B cell (primary cell): ENCODE measurements at regions of chr3 and their contacts with region 1.

Region 1: DNA sequence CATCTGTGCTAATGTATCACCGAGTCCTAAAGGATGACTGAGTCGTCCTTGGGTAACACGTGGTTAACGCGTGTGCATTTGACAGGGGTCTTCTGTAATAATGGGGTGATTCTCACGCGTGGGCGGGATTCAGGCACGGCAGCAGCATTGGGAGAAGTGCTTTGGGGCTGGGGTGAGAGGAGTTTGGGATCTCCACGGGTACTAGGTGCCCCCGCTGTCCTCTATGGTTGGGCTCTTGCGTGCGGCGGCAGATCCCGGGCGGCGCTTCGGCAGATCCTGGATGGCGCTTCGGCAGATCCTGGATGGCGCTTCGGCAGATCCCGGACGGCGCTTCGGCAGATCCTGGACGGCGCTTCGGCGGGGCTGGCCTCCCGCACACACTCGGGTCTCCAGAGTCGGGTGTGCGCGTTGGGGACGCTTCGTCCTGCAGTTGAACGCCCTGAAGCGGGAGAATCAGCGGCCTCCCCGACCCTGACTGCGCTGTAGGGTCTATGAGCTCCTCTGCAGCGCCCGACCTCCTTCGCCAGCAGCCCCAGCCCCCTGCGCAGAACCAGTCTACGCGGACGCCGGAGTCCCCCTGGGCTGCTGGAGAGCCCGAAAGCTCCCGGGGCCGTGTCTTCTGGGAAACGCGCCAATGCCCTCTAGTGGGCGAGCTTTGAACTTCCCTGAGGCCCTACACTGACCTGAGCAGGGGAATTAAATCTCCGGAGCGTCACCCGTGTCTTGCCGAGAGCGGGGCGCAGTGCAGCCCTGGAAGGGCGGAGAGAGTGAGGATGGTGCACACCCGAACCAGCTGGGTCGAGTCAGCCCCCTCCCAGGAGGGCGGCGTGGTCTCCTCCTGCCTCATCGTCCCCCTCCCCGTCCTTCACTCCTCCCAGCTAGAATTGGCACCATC is 48.1 kb upstream of the EPHB3 start:
- DNase-seq: peak; percentile 89
- ATAC-seq: peak; percentile 100
- H3K4me3 ChIP-seq: peak overlapping the region in 4 of 5 experiments; percentile 15 to 46 (median 40)
- H3K4me3 Mint-ChIP-seq: peak overlapping the region; percentile 64
- H3K27ac ChIP-seq: no peak overlapping the region
- H3K27ac Mint-ChIP-seq: no peak overlapping the region
- H3K4me1 ChIP-seq: peaks cover 11 to 14% of the 10 kb centered on the region in 2 donors
- H3K4me1 Mint-ChIP-seq: peaks cover 14% of the 10 kb centered on the region
- H3K27me3 ChIP-seq: peaks cover 0 to 33% (median 25%) of the 10 kb centered on the region in 4 experiments
- H3K27me3 Mint-ChIP-seq: peaks cover 70% of the 10 kb centered on the region
- CTCF ChIP-seq: peak; percentile 86

Region 2: GRCh38 chr3:184354121-184354728 is 159.3 kb before region 1 on chr3:
- CTCF ChIA-PET with region 1: interaction called, 76 read pairs
- POLR2A ChIA-PET with region 1: no interaction called
- intact Hi-C with region 1: loop called (anchors 1 kb)
- DNase-seq: peak; percentile 74
- ATAC-seq: peak; percentile 79
- H3K4me3 ChIP-seq: no peak overlapping the region
- H3K4me3 Mint-ChIP-seq: no peak overlapping the region
- H3K27ac ChIP-seq: no peak overlapping the region
- H3K27ac Mint-ChIP-seq: no peak overlapping the region
- H3K4me1 ChIP-seq: peaks cover 0 to 8% of the 10 kb centered on the region in 2 donors
- H3K4me1 Mint-ChIP-seq: no peaks in the 10 kb centered on the region
- H3K27me3 ChIP-seq: no peaks in the 10 kb centered on the region
- H3K27me3 Mint-ChIP-seq: no peaks in the 10 kb centered on the region
- CTCF ChIP-seq: peak; percentile 73

Region 3: DNA sequence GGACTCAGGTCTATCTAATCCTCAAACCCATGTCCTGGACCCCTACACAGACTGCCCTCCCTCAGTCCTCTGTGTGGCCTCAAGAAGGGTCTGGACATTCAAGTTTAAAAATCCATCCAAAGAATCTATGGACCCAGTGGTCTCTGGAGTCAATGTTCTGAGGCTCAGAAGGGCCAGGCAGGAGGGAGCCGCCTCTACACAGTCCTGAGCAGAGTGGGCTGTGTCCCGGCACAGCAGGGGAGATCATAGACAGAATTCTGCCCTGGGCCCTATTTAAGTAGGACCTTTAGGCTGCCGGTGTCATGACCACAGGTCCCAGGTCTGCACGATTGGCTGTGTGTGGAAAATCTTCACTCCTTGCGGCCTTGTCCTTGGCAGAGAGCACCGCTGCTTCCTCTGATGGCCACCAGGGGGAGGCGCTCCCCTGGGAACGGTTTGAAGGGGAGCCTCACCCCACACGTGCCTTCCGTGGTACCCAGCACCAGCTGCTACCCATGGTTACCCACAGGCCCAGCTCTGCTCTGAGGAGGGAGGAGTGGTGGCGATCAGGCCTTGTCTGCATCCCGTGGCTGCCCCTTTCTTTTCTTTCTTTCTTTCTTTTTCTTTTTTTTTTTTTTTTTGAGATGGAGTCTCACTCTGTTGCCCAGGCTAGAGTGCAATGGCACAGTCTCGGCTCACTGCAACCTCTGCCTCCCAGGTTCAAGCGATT is 95.8 kb before region 1 on chr3:
- CTCF ChIA-PET with region 1: interaction called, 54 read pairs
- POLR2A ChIA-PET with region 1: interaction called, 5 read pairs
- intact Hi-C with region 1: loop called (anchors 1 kb)
- DNase-seq: peak; percentile 86
- ATAC-seq: peak; percentile 99
- H3K4me3 ChIP-seq: no peak overlapping the region
- H3K4me3 Mint-ChIP-seq: no peak overlapping the region
- H3K27ac ChIP-seq: no peak overlapping the region
- H3K27ac Mint-ChIP-seq: no peak overlapping the region
- H3K4me1 ChIP-seq: no peaks in the 10 kb centered on the region
- H3K4me1 Mint-ChIP-seq: no peaks in the 10 kb centered on the region
- H3K27me3 ChIP-seq: no peaks in the 10 kb centered on the region
- H3K27me3 Mint-ChIP-seq: peaks cover 4% of the 10 kb centered on the region
- CTCF ChIP-seq: peak; percentile 82

Region 4: DNA sequence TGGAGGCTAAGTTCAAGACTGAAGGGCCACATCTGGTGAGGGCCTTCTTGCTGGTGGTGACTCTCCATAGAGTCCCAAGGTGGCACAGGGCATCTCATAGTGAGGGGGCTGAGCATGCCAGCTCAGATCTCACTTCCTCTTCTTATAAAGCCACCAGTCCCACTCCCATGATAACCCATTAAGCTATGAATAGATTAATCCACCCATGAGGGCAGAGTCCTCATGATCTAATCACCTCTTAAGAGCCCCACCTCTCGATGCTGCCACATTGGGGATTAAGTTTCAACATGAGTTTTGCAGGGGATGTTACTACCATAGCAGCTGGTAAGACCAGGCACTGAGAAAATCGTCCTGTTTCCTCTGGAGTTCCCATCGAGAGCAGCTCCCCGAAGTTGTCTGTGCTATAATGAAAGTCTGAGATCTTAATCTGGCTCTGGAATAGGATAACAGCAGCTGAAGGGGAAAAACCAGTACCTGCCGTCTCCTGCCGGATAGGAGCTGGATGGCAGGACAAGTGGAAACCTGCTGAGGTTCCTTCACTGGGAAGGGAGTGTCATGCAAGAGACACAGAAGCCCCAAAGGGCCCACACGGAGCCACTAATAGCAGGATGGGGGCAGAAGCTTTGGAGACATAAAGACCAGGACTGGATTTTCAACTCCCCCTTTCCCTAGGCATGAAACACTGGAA is 31.4 kb before region 1 on chr3:
- CTCF ChIA-PET with region 1: interaction called, 12 read pairs
- POLR2A ChIA-PET with region 1: no interaction called
- intact Hi-C with region 1: no loop called
- DNase-seq: no peak
- ATAC-seq: no peak
- H3K4me3 ChIP-seq: no peak overlapping the region
- H3K4me3 Mint-ChIP-seq: no peak overlapping the region
- H3K27ac ChIP-seq: no peak overlapping the region
- H3K27ac Mint-ChIP-seq: no peak overlapping the region
- H3K4me1 ChIP-seq: peaks cover 3 to 6% of the 10 kb centered on the region in 2 donors
- H3K4me1 Mint-ChIP-seq: peaks cover 5% of the 10 kb centered on the region
- H3K27me3 ChIP-seq: peaks cover 0 to 7% (median 1%) of the 10 kb centered on the region in 4 experiments
- H3K27me3 Mint-ChIP-seq: peaks cover 17% of the 10 kb centered on the region
- CTCF ChIP-seq: no peak

Region 5: GRCh38 chr3:184531626-184532280 is 18.2 kb after region 1 on chr3:
- CTCF ChIA-PET with region 1: interaction called, 26 read pairs
- POLR2A ChIA-PET with region 1: no interaction called
- intact Hi-C with region 1: no loop called
- DNase-seq: no peak
- ATAC-seq: no peak
- H3K4me3 ChIP-seq: no peak overlapping the region
- H3K4me3 Mint-ChIP-seq: no peak overlapping the region
- H3K27ac ChIP-seq: no peak overlapping the region
- H3K27ac Mint-ChIP-seq: no peak overlapping the region
- H3K4me1 ChIP-seq: no peaks in the 10 kb centered on the region
- H3K4me1 Mint-ChIP-seq: no peaks in the 10 kb centered on the region
- H3K27me3 ChIP-seq: peaks cover 0 to 35% (median 4%) of the 10 kb centered on the region in 4 experiments
- H3K27me3 Mint-ChIP-seq: peaks cover 54% of the 10 kb centered on the region
- CTCF ChIP-seq: no peak

Region 6: GRCh38 chr3:184543843-184544512 is 30.5 kb after region 1 on chr3:
- CTCF ChIA-PET with region 1: interaction called, 14 read pairs
- POLR2A ChIA-PET with region 1: no interaction called
- intact Hi-C with region 1: no loop called
- DNase-seq: peak; percentile 85
- ATAC-seq: peak; percentile 81
- H3K4me3 ChIP-seq: no peak overlapping the region
- H3K4me3 Mint-ChIP-seq: no peak overlapping the region
- H3K27ac ChIP-seq: no peak overlapping the region
- H3K27ac Mint-ChIP-seq: no peak overlapping the region
- H3K4me1 ChIP-seq: peaks cover 6 to 13% of the 10 kb centered on the region in 2 donors
- H3K4me1 Mint-ChIP-seq: peaks cover 8% of the 10 kb centered on the region
- H3K27me3 ChIP-seq: peaks cover 0 to 21% (median 6%) of the 10 kb centered on the region in 4 experiments
- H3K27me3 Mint-ChIP-seq: peaks cover 29% of the 10 kb centered on the region
- CTCF ChIP-seq: peak; percentile 88

Region 7: DNA sequence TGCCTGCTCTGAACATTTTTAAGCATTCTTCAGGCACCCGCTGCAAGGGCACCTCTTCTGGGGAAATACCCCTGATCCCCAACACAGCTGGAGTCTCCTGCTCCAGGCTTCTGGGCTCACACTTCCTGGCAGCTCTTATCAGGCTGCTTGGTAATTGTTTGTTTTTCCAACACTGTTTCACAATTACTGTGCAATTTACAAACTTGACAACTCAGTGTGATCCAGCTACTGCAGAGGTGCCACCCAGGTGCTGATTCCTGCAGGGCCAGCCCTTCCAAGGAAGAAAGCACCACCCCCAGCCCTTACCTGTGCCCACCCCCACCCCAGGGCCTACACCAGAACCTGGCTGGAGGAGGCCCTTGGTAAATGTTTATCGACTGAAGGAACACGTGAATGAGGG is 131.8 kb after region 1 on chr3:
- CTCF ChIA-PET with region 1: no interaction called
- POLR2A ChIA-PET with region 1: no interaction called
- intact Hi-C with region 1: no loop called
- DNase-seq: no peak
- ATAC-seq: no peak
- H3K4me3 ChIP-seq: no peak overlapping the region
- H3K4me3 Mint-ChIP-seq: no peak overlapping the region
- H3K27ac ChIP-seq: no peak overlapping the region
- H3K27ac Mint-ChIP-seq: no peak overlapping the region
- H3K4me1 ChIP-seq: no peaks in the 10 kb centered on the region
- H3K4me1 Mint-ChIP-seq: no peaks in the 10 kb centered on the region
- H3K27me3 ChIP-seq: peaks cover 0 to 2% (median 0%) of the 10 kb centered on the region in 4 experiments
- H3K27me3 Mint-ChIP-seq: peaks cover 3% of the 10 kb centered on the region
- CTCF ChIP-seq: no peak

Region 8: DNA sequence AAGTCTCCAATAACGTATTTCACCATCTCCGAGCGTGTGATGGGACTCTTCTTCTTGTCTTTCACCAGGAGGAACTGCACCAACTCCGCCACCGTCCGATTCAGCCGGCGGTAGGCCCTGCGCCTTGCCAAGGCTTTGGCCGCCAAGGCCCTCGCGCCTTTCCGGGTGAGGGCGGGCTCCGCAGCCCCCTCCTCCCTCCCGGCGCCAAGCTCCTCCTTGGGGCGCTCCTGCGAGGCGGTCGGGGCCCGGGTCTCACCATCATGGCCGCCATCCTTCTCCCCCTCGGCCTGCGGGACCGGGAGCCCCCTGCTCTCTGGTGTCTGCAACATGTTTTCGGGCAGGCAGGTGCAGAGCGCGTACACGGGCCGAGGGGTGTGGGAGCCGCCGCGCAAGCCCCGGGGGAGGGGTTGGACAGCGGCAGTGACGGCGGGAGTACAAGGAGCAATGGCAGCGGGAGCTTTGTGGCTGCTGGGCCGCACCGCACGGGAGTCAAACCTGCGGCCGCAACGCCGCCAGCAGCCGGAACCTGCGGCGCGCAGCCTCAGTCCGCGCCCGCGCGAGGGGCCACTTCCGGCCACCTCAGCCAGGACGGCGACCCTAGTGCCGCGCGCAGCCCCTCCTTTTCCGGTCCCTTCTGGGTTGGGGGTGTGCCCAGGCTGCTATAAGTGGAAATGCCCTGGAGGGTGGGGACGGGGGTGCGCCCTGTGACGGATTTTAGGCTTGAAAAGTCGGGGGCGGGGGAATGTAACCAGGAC is 198.1 kb after region 1 on chr3 and contains the start of gene MAGEF1:
- CTCF ChIA-PET with region 1: no interaction called
- POLR2A ChIA-PET with region 1: no interaction called
- intact Hi-C with region 1: no loop called
- DNase-seq: peak; percentile 73
- ATAC-seq: peak; percentile 81
- H3K4me3 ChIP-seq: peak within 1 kb of the TSS; percentile 72 to 87 (median 77)
- H3K4me3 Mint-ChIP-seq: peak within 1 kb of the TSS; percentile 92
- H3K27ac ChIP-seq: peak within 1 kb of the TSS; percentile 73 to 78
- H3K27ac Mint-ChIP-seq: peak within 1 kb of the TSS; percentile 92
- H3K4me1 ChIP-seq: peaks cover 14 to 29% of the 10 kb centered on the region in 2 donors
- H3K4me1 Mint-ChIP-seq: peaks cover 30% of the 10 kb centered on the region
- H3K27me3 ChIP-seq: no peaks in the 10 kb centered on the region
- H3K27me3 Mint-ChIP-seq: no peaks in the 10 kb centered on the region
- CTCF ChIP-seq: no peak
- total RNA-seq, gene MAGEF1: 26.2 and 27.1 TPM in 2 replicates

Region 9: DNA sequence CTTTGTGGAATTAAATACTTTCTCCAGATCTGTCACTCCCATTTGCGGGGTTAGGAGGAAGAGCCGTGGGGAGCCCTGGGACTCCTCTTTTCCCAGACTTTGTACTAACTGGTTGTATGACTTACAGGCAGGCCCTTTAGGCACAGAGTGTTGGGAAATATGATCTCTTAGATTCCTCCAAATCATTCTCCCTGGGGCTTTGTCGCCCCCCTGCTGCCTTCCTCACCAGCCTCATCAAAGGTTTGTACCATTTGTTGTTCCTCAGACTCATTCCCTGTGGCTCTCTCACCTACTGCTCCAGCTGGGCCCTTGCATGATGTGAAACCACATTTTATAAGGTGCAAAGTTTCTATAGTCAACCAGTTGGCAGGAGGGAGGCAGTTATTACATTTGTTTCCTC is 1974.3 kb after region 1 on chr3:
- CTCF ChIA-PET with region 1: no interaction called
- POLR2A ChIA-PET with region 1: no interaction called
- intact Hi-C with region 1: no loop called
- DNase-seq: no peak
- ATAC-seq: no peak
- H3K4me3 ChIP-seq: no peak overlapping the region
- H3K4me3 Mint-ChIP-seq: no peak overlapping the region
- H3K27ac ChIP-seq: no peak overlapping the region
- H3K27ac Mint-ChIP-seq: no peak overlapping the region
- H3K4me1 ChIP-seq: no peaks in the 10 kb centered on the region
- H3K4me1 Mint-ChIP-seq: no peaks in the 10 kb centered on the region
- H3K27me3 ChIP-seq: no peaks in the 10 kb centered on the region
- H3K27me3 Mint-ChIP-seq: no peaks in the 10 kb centered on the region
- CTCF ChIP-seq: no peak